Right ventricle myocardium inferior (tissue), 1 donor: ENCODE measurements at regions of chr14 and their contacts with region 1.

Region 1: DNA sequence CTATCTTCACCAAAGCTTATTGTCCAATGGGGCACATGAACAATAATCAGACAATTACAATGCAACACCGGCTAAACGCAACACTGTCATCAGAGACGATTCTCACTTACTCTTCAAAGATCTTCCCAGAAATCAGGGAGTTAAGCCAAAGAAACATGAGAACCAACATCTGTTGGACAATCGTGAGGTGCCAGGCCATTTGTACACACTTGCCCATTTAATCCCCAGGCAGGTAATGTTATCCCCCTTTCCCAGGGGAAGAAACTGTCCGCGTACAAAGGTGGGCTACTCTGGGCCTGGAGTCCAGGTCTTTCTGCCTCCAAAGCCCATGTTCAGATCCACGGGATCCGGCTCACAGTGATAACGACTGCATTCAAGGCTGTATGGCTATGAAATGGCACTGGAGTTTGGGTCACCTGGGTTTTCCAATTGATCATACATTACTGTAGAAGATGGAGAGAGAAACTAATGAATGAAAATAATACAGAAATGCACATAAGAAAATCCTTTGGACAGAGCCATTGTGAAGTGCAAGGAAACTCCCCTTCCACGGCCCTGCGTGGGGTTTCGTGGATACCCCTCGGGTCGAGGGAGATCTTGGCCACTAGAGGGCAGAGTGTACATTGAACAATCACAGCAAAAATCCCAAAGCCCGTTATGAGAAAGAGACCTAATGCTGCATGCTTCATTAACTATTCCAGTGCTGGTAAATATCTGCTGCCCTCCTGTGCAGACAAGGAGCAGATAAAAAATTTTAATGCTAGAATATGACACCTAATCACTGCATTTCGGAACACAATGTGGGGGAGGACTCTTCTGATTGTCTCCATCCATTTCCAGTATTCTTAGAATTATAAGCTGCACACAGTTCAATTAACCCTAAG is 111.4 kb downstream of the EGLN3 start:
- DNase-seq: no peak
- ATAC-seq: peak; percentile 76

Region 2: DNA sequence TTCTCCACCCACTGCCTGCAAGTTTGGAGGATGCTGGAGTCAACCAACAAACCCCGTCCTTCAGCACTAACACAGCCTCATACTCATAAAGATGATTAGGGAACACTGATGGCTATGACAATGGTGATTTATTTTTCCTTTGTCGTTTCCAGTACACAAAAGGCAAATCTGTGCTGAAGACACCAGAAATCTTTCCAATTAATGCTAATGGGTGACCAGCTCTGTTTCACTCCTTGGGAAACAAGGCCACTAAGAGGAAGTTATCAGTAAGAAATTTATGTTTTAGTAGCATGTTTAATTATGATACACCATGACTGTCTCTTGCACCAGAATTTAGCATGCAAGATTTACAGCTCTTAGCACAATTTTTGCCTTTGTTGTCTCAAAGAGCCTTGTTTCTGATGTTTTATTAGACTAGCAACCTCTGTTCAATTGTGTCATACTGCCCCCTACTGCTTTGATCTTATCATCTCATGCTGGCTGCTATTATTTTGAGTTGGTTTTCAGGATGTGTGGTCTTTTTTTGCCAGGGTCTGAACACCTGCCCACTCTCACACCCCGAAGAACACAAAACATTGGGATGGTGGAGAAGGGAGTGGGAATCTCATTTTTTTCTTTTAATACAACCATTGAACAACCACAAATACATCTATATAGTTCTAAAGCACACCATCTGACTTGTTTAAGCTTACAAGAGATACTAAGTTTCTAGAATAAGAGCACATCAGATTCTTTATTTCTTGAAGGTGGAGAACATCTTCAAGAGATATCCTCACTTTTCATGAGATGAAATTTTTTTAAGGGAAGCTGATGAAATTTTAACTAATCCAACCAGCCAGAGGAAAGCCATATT is 461.7 kb after region 1 on chr14:
- intact Hi-C with region 1: loop called (anchors 1 kb)
- DNase-seq: no peak
- ATAC-seq: peak; percentile 43